ENCODE measurements at regions of chr20 and their contacts with region 1.

Region 1: GRCh38 chr20:56974499-56975236 is 291.8 kb downstream of the BMP7 start:
- DNase-seq: peak; percentile 55
- H3K4me3 ChIP-seq: no peak overlapping the region
- H3K27ac ChIP-seq: no peak overlapping the region
- H3K4me1 ChIP-seq: no peaks in the 10 kb centered on the region
- H3K27me3 ChIP-seq: peaks cover 3% of the 10 kb centered on the region
- CTCF ChIP-seq: peak; percentile 86

Region 2: GRCh38 chr20:56801744-56802670 is 172.7 kb before region 1 on chr20:
- CTCF ChIA-PET with region 1: no interaction called
- dilution Hi-C with region 1: no loop called
- in situ Hi-C with region 1: no loop called
- intact Hi-C with region 1: loop called (anchors 10 kb)
- DNase-seq: no peak
- H3K4me3 ChIP-seq: no peak overlapping the region
- H3K27ac ChIP-seq: no peak overlapping the region
- H3K4me1 ChIP-seq: peaks cover 17% of the 10 kb centered on the region
- H3K27me3 ChIP-seq: no peaks in the 10 kb centered on the region
- CTCF ChIP-seq: no peak

Region 3: DNA sequence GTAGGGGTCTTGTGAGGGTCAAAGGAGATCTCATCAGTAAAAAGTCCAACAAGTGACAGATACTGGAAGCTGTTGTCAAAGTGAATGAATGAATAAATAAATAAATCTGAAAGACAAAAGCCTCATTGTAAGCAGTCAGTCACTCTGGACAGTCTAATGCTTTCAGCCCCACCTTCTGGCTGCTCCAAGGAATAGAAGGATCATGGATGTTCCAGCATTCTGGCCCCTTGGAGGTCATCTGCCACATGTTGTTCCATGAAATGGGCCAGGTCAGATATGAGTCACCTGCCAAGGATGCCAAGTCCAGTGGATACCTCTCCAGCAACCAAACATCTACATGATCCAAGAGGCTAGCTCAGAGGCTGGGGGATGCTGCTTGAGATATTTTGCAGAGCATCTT is 106.1 kb after region 1 on chr20:
- CTCF ChIA-PET with region 1: no interaction called
- dilution Hi-C with region 1: no loop called
- in situ Hi-C with region 1: no loop called
- intact Hi-C with region 1: loop called (anchors 2 kb)
- DNase-seq: peak; percentile 33
- H3K4me3 ChIP-seq: no peak overlapping the region
- H3K27ac ChIP-seq: no peak overlapping the region
- H3K4me1 ChIP-seq: no peaks in the 10 kb centered on the region
- H3K27me3 ChIP-seq: no peaks in the 10 kb centered on the region
- CTCF ChIP-seq: peak; percentile 14 to 46

Region 4: DNA sequence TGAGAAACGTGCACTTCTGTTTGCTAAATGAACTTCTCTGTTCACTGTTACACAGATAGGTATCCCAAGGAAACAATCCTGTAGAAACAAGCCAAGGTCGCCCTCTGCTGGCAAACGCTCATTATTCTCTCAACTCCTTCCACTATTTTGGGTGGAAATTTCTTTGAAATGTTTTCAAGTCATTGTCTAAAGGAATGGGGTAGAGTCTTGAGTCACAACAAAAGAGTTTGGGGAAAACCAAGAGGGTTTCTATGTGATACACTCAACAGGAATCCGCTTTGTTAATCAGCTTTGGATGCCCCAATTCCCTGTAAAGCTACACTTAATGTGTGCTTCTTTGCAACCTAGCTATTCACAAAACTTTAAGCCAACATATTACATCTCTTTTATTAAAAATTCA is 371.8 kb after region 1 on chr20:
- CTCF ChIA-PET with region 1: no interaction called
- dilution Hi-C with region 1: no loop called
- in situ Hi-C with region 1: no loop called
- intact Hi-C with region 1: loop called (anchors 10 kb)
- DNase-seq: peak; percentile 75
- H3K4me3 ChIP-seq: no peak overlapping the region
- H3K27ac ChIP-seq: no peak overlapping the region
- H3K4me1 ChIP-seq: peaks cover 4% of the 10 kb centered on the region
- H3K27me3 ChIP-seq: no peaks in the 10 kb centered on the region
- CTCF ChIP-seq: peak; percentile 75 to 76

Measured in mammary epithelial cell (primary cell).